ENCODE measurements at regions of chr9 and their contacts with region 1.

Region 1: GRCh38 chr9:6305954-6306563 is 22.1 kb upstream of the TPD52L3 start:
- DNase-seq: no peak
- H3K4me3 ChIP-seq: no peak overlapping the region
- H3K27me3 ChIP-seq: no peaks in the 10 kb centered on the region
- CTCF ChIP-seq: peak; percentile 42

Region 2: GRCh38 chr9:6272229-6272598 is 33.8 kb before region 1 on chr9:
- CTCF ChIA-PET with region 1: no interaction called
- POLR2A ChIA-PET with region 1: no interaction called
- DNase-seq: peak; percentile 26
- H3K4me3 ChIP-seq: no peak overlapping the region
- H3K27me3 ChIP-seq: no peaks in the 10 kb centered on the region
- CTCF ChIP-seq: no peak

Region 3: GRCh38 chr9:6330958-6331634 is 25.0 kb after region 1 on chr9:
- CTCF ChIA-PET with region 1: interaction called, 10 read pairs
- POLR2A ChIA-PET with region 1: no interaction called
- DNase-seq: no peak
- H3K4me3 ChIP-seq: no peak overlapping the region
- H3K27me3 ChIP-seq: no peaks in the 10 kb centered on the region
- CTCF ChIP-seq: no peak

Measured in BJ (cell line).